Activated B cell treated with CpG ODN at 0.5 μM for 24 hours (primary cell): ENCODE measurements at regions of chr12 and their contacts with region 1.

Region 1: DNA sequence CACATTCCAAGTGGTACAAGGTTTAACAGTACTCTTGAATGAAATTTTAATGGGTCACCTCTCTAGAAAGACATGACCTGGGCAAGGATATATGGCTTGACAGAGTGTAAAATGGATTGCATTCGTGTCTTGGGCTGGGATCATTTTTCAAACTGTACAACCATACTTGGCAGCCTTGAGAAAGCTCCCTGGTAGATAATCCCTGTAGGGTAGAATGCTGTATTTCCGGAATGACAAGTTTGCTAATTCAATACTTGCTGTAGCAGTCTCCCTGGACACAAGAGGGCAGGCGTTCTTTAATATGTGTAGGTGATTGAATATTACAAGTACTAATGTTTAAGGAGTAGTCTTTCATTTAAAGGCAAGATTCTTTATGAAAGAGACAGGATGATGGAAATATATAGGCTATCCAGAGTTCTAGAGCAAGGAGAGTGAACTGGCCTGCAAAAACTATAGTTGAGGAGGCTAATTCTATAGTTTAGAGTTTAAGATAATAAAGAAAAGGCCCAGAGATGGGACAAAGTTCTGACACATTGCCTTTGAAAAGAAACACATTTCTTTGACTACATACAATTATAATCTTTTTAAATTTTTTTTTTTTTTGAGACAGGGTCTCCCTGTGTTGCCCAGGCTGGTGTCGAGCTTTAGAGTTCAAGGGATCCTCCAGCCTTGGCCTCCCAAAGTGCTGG is 53.4 kb downstream of the PLBD1 start:
- DNase-seq: no peak
- ATAC-seq: no peak
- H3K4me3 Mint-ChIP-seq: no peak overlapping the region
- H3K27ac Mint-ChIP-seq: no peak overlapping the region
- H3K4me1 Mint-ChIP-seq: no peaks in the 10 kb centered on the region
- H3K27me3 Mint-ChIP-seq: no peaks in the 10 kb centered on the region
- CTCF ChIP-seq: no peak

Region 2: DNA sequence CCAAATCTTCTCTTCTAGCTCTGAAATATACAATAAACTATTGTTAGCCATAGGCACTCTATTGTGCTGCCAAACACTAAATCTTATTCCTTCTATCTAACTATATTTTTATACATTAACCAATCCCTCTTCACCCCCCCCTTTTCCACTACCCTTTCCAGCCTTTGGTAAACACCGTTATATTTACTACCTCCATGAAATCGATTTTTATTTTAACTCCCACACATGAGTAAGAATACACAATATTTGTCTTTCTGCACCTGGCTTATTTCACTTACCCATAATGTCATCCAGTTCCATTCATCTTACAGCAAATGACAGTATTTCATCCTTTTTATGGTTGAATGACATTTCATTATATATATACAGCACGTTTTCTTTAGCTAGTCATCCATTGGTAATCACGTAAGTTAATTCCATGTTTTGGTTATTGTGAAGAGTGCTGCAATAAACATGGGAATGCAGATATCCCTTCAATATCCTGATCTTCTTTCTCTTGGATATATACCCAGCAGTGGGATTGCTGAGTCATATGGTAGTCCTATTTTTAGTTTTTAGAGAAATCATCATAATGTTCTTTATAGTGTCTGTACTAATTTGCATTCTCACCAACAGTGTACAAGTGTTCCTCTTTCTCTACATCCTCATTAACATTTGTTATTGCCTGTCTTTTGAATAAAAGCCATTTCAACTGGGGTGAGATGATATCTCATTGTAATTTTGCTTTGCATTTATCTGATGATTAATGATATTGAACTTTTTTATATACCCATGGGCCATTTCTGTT is 87.6 kb after region 1 on chr12:
- CTCF ChIA-PET with region 1: no interaction called
- POLR2A ChIA-PET with region 1: no interaction called
- intact Hi-C with region 1: no loop called
- DNase-seq: no peak
- ATAC-seq: no peak
- H3K4me3 Mint-ChIP-seq: no peak overlapping the region
- H3K27ac Mint-ChIP-seq: no peak overlapping the region
- H3K4me1 Mint-ChIP-seq: peaks cover 3% of the 10 kb centered on the region
- H3K27me3 Mint-ChIP-seq: no peaks in the 10 kb centered on the region
- CTCF ChIP-seq: no peak

Region 3: DNA sequence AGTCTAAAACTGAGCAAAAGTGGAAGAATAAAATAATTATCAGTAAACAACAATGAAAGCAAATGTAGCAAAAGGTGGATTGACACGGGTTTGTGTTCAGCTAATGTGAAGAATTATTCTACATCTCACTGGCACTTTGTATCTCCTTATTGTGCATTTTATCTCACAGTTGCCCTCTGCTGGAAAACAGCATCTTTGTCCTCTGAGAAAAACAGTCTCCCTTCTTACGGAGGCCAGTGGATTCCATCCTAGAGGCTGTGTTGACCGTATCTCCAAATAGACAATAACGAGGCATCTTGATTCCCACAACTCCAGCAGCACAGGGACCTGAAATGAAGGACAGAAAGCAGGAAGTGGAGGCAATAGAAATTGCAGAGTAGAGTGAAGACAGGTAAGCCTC is 104.7 kb after region 1 on chr12:
- CTCF ChIA-PET with region 1: interaction called, 15 read pairs
- POLR2A ChIA-PET with region 1: no interaction called
- intact Hi-C with region 1: loop called (anchors 1 kb)
- DNase-seq: no peak
- ATAC-seq: no peak
- H3K4me3 Mint-ChIP-seq: peak overlapping the region; percentile 19
- H3K27ac Mint-ChIP-seq: peak overlapping the region; percentile 9
- H3K4me1 Mint-ChIP-seq: peaks cover 48% of the 10 kb centered on the region
- H3K27me3 Mint-ChIP-seq: no peaks in the 10 kb centered on the region
- CTCF ChIP-seq: no peak

Region 4: DNA sequence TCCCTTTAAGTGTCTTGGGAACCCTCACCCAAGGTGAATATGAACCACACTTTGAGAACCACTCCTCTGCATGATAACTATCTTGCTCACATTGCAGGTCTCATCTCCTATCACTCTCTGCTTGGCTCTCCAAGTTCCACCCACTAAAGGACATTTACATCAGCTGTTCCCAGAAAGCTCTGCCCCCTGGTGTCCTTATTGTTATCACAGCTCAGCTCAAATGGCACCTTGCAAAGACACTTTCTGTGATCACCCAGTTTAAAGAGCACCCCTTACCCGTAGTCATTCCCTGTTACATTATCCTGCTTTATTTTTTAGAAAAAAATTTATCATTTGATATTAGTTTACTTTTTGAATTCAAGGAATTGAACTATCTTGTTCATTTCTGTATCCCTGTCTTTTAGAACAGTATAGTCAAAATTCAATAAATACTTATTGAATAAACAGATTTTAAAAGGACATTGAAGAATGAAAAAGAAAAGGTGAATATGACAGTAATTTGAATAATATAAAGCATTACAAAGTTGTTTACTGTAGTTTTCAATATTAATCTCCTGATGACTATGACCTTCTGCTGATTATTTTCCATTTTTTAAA is 202.6 kb after region 1 on chr12:
- CTCF ChIA-PET with region 1: interaction called, 4 read pairs
- POLR2A ChIA-PET with region 1: no interaction called
- intact Hi-C with region 1: loop called (anchors 1 kb)
- DNase-seq: no peak
- ATAC-seq: peak; percentile 75
- H3K4me3 Mint-ChIP-seq: no peak overlapping the region
- H3K27ac Mint-ChIP-seq: no peak overlapping the region
- H3K4me1 Mint-ChIP-seq: peaks cover 2% of the 10 kb centered on the region
- H3K27me3 Mint-ChIP-seq: peaks cover 8% of the 10 kb centered on the region
- CTCF ChIP-seq: peak; percentile 15